ENCODE measurements at regions of chr6 and their contacts with region 1.

Region 1: DNA sequence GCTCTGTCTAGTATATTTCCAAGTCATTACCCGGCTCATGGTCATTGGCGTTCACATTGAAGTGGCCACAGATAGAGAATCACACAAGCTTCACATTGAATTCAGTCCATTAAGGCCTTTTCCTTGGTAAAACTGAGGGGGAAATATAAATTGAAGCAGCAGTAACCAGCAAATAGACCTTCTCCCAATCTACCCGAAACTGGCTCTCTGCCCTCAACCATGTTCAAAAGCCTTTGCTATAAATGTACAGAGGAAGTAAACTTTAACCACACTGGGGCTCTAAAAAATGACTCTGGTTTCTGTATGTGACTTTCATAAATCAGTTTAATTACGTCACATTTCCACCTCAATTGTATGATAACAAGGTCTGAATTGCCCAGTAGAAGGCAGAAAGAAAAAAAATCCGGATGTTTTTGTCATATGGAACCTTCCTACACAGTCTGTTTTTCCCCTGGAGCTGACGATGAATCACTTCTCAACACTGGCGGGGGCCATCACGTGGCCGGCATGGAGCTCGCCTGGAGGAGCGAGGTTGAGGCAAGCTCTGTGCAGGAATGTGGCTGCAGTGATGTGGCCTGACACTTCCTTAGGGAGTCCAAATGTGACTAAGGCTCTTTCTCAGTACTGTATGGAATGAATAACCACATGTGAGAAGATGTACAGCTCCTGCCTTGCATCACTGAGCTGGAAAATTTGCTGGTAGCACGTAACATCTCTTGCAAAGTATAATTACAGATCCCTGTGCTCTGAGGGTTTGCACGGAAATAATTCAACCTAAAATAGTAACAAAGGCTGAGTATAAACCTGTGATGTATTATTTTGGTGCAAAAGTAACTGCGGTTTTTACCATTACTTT is 58.6 kb upstream of the SNX9 start:
- DNase-seq: peak; percentile 63 to 94 (median 78)
- ATAC-seq: peak; percentile 68
- H3K4me3 ChIP-seq: peak overlapping the region; percentile 30
- H3K4me3 Mint-ChIP-seq: peak overlapping the region; percentile 72
- H3K27ac ChIP-seq: peak overlapping the region; percentile 61
- H3K27ac Mint-ChIP-seq: peak overlapping the region; percentile 92
- H3K4me1 ChIP-seq: peaks cover 71% of the 10 kb centered on the region
- H3K4me1 Mint-ChIP-seq: peaks cover 74% of the 10 kb centered on the region
- H3K27me3 ChIP-seq: no peaks in the 10 kb centered on the region
- H3K27me3 Mint-ChIP-seq: no peaks in the 10 kb centered on the region
- CTCF ChIP-seq: no peak

Region 2: DNA sequence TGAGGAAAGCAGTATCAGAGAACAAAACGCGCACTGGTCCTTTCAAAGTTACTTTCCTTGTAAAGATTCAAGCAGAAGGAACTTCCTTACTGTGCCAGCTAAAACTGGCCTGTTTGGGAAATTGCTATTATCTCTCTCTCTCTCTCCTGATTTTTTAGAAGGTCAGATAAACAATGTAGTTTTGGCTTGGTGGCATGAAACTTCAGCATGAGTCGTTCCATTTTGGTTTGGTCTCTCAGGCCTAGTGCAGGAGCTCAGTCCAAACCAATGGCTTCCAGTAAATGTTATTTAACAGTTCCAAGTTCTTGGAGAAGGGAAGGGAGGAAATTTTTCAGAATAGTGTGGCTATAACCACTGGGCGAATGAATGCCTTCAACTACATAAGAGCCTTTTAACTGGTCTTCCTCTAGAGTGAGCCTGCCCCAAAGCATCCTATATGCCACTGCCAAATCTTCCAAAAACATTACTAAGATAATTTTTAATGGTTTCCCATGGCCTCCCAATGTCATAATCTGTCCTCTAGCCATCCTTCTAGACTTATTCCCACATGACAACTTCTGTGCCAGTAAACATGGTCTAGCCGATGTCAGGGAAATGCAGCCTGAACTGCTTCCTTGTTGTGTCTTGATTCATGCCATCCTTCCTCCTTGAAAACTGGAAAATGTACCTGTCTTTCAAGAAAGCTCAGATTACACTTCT is 49.5 kb after region 1 on chr6:
- CTCF ChIA-PET with region 1: interaction called, 3 read pairs
- POLR2A ChIA-PET with region 1: interaction called, 4 read pairs
- intact Hi-C with region 1: loop called in 1 of 2 experiments (anchors 2 kb)
- DNase-seq: no peak
- ATAC-seq: no peak
- H3K4me3 ChIP-seq: no peak overlapping the region
- H3K4me3 Mint-ChIP-seq: no peak overlapping the region
- H3K27ac ChIP-seq: no peak overlapping the region
- H3K27ac Mint-ChIP-seq: peak overlapping the region; percentile 82
- H3K4me1 ChIP-seq: peaks cover 25% of the 10 kb centered on the region
- H3K4me1 Mint-ChIP-seq: peaks cover 68% of the 10 kb centered on the region
- H3K27me3 ChIP-seq: no peaks in the 10 kb centered on the region
- H3K27me3 Mint-ChIP-seq: no peaks in the 10 kb centered on the region
- CTCF ChIP-seq: no peak

Region 3: DNA sequence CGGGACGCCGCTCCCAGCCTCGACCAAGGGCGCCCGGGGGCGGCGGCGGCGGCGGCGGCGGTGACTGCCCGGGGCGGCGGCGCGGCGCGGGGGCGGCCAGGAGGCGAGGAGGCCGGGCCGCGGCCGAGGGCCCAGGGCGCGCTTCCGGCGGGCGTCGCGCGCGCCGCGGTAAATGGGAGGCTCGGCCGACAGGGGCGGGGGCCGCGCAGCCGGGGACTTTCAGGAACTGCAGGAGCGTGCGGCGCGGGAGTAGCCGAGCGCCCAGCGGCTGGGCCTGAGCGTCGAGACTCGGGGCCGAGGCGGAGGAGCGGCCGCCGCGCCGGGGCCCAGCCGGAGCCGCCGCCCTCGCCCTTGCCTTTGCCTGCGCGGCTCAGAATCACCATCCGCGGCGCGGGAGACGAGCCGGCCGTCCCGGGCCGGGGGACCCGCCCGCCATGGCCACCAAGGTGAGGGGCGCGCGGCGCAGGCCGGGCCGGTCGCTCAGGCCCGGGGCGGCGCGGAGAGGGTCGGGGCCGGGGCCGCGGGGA is 58.7 kb after region 1 on chr6 and contains the start of gene SNX9:
- CTCF ChIA-PET with region 1: interaction called, 3 read pairs
- POLR2A ChIA-PET with region 1: interaction called, 6 read pairs
- intact Hi-C with region 1: loop called (anchors 1 to 2 kb)
- DNase-seq: peak in 13 of 14 experiments; percentile 38 to 88 (median 59)
- ATAC-seq: peak; percentile 46
- H3K4me3 ChIP-seq: peak within 1 kb of the TSS; percentile 78
- H3K4me3 Mint-ChIP-seq: peak within 1 kb of the TSS; percentile 96
- H3K27ac ChIP-seq: peak within 1 kb of the TSS; percentile 25 to 77
- H3K27ac Mint-ChIP-seq: peak within 1 kb of the TSS; percentile 98
- H3K4me1 ChIP-seq: peaks cover 17% of the 10 kb centered on the region
- H3K4me1 Mint-ChIP-seq: peaks cover 58% of the 10 kb centered on the region
- H3K27me3 ChIP-seq: no peaks in the 10 kb centered on the region
- H3K27me3 Mint-ChIP-seq: no peaks in the 10 kb centered on the region
- CTCF ChIP-seq: no peak
- total RNA-seq, gene SNX9: 46.6 to 48.5 TPM

Region 4: DNA sequence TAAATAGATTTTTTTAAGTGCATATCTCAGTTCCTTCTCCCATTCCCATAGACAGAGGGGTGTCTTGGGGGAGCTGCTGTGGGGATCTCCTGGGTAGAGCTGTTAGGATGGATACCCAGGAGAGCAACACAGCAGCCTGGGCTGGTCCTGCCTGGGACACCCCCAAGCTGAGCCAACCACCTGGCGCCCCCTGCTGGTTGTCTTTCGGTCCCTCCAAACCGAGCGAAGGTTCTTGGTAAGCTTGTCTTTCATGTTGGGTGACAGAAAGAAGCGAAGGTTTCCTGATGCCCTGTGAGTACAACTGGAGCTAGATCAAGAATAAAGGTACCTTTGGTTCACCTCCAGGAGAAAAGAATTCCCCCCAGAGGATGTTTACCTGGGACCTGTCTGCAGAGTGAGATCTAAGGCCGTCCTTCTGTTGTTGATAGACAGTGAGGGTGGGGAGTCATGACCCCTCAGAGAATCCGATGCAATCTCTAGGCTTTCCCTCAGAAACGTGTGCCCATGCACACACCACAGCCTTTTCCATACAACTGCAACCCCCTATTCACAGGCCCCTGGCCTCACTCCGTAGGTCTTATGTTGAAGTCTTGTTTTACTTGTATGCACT is 109.4 kb after region 1 on chr6:
- CTCF ChIA-PET with region 1: interaction called, 11 read pairs
- POLR2A ChIA-PET with region 1: interaction called, 4 read pairs
- intact Hi-C with region 1: no loop called
- DNase-seq: peak; percentile 75 to 92 (median 84)
- ATAC-seq: peak; percentile 74
- H3K4me3 ChIP-seq: no peak overlapping the region
- H3K4me3 Mint-ChIP-seq: no peak overlapping the region
- H3K27ac ChIP-seq: no peak overlapping the region
- H3K27ac Mint-ChIP-seq: peak overlapping the region; percentile 47
- H3K4me1 ChIP-seq: peaks cover 15% of the 10 kb centered on the region
- H3K4me1 Mint-ChIP-seq: peaks cover 39% of the 10 kb centered on the region
- H3K27me3 ChIP-seq: no peaks in the 10 kb centered on the region
- H3K27me3 Mint-ChIP-seq: no peaks in the 10 kb centered on the region
- CTCF ChIP-seq: peak; percentile 92

Region 5: DNA sequence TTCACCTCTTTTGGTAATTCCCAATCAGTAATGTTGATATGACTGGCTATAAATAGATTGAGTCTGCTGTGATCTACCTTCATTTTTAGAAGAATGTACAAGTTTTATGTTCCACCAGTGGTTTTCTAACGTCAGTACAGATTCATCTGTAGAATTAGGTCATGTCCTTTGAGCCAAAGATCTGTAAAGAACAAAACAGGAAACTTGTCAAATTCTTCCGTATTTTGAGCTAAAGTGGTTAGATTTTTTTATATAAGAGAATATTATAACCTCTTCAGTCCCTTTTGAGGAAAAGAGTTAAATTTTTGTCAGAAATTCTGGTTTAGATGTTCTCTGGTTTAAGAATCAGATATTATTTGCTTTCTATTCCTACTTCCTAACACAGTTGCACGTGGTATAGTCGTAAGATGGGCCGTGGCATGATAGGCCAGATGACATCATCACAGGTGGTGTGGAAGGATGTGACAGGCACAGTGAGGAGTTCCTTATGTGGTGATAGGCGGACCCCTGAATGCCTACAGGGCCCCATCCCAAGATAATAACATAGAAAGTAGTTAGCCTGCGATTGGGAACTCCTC is 120.9 kb after region 1 on chr6:
- CTCF ChIA-PET with region 1: interaction called, 3 read pairs
- POLR2A ChIA-PET with region 1: interaction called, 21 read pairs
- intact Hi-C with region 1: loop called in 1 of 2 experiments (anchors 1 kb)
- DNase-seq: peak in 13 of 14 experiments; percentile 18 to 88 (median 50)
- ATAC-seq: peak; percentile 83
- H3K4me3 ChIP-seq: no peak overlapping the region
- H3K4me3 Mint-ChIP-seq: peak overlapping the region; percentile 6
- H3K27ac ChIP-seq: peak overlapping the region; percentile 83 to 93
- H3K27ac Mint-ChIP-seq: peak overlapping the region; percentile 95
- H3K4me1 ChIP-seq: peaks cover 16% of the 10 kb centered on the region
- H3K4me1 Mint-ChIP-seq: peaks cover 86% of the 10 kb centered on the region
- H3K27me3 ChIP-seq: no peaks in the 10 kb centered on the region
- H3K27me3 Mint-ChIP-seq: no peaks in the 10 kb centered on the region
- CTCF ChIP-seq: peak; percentile 19

Region 6: GRCh38 chr6:158026054-158026900 is 261.9 kb after region 1 on chr6:
- CTCF ChIA-PET with region 1: interaction called, 4 read pairs
- POLR2A ChIA-PET with region 1: no interaction called
- intact Hi-C with region 1: loop called in 1 of 2 experiments (anchors 2 kb)
- DNase-seq: peak; percentile 52 to 92 (median 74)
- ATAC-seq: peak; percentile 75
- H3K4me3 ChIP-seq: peak overlapping the region; percentile 42
- H3K4me3 Mint-ChIP-seq: peak overlapping the region; percentile 86
- H3K27ac ChIP-seq: peak overlapping the region; percentile 77 to 88
- H3K27ac Mint-ChIP-seq: peak overlapping the region; percentile 92
- H3K4me1 ChIP-seq: peaks cover 42% of the 10 kb centered on the region
- H3K4me1 Mint-ChIP-seq: peaks cover 42% of the 10 kb centered on the region
- H3K27me3 ChIP-seq: no peaks in the 10 kb centered on the region
- H3K27me3 Mint-ChIP-seq: no peaks in the 10 kb centered on the region
- CTCF ChIP-seq: peak; percentile 85